OCI-LY7 (cell line): ENCODE measurements at regions of chr3 and their contacts with region 1.

Region 1: GRCh38 chr3:100386437-100387074 is 14.3 kb downstream of the TOMM70 start:
- DNase-seq: no peak
- H3K4me3 ChIP-seq: no peak overlapping the region
- H3K27ac ChIP-seq: no peak overlapping the region
- H3K4me1 ChIP-seq: no peaks in the 10 kb centered on the region
- CTCF ChIP-seq: no peak

Region 2: DNA sequence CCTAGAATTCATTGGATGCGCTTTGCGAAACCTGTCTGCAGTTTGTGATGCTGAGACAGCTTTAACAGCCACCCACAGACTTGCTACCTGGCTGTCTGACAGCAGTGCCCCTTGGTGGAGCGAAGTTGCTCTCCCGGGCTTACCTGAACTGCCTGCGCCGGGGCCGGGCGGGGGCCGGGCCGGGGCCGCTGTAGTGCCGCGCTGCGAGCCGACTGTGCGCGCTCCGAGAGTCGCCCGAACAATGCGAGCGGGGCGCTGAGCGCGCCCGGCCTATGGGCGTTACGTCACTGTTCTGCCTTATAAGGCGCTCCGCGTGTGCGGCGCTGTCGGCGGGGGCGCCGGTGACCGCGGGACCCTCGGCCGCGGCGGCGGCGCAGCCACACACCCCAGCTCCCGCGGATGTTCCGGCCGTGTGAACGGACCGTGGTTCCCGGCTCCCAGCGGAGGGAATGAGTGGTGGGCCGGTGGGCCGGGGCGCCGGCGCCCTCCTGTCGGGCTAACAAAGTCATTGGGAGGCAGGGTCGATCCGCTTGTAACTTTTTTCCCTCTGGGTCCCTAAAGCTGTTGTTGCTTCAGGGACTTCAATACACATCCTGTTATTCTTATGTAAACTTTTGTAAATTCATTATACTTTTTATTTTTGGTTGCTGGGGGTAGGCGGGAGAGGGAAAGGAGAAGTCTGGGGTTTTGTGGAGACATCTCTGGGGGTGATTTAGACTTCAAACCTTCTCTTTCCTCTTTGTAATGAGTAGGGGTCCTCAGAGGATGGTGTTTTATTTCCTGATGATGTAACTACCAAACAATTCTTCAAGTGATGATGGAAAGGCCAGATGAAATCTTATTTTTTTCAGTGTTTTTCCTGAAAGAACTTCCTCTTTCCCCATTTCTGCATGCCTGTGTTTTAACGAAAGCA is 510.4 kb before region 1 on chr3:
- CTCF ChIA-PET with region 1: no interaction called
- POLR2A ChIA-PET with region 1: no interaction called
- intact Hi-C with region 1: no loop called
- DNase-seq: no peak
- H3K4me3 ChIP-seq: no peak overlapping the region
- H3K27ac ChIP-seq: no peak overlapping the region
- H3K4me1 ChIP-seq: no peaks in the 10 kb centered on the region
- CTCF ChIP-seq: no peak

Region 3: GRCh38 chr3:100339786-100340185 is 46.8 kb before region 1 on chr3:
- CTCF ChIA-PET with region 1: no interaction called
- POLR2A ChIA-PET with region 1: interaction called, 3 read pairs
- intact Hi-C with region 1: loop called (anchors 5 kb)
- DNase-seq: no peak
- H3K4me3 ChIP-seq: no peak overlapping the region
- H3K27ac ChIP-seq: no peak overlapping the region
- H3K4me1 ChIP-seq: peaks cover 9% of the 10 kb centered on the region
- CTCF ChIP-seq: no peak

Region 4: GRCh38 chr3:100370756-100371155 is 15.8 kb before region 1 on chr3:
- CTCF ChIA-PET with region 1: no interaction called
- POLR2A ChIA-PET with region 1: interaction called, 10 read pairs
- intact Hi-C with region 1: no loop called
- DNase-seq: no peak
- H3K4me3 ChIP-seq: no peak overlapping the region
- H3K27ac ChIP-seq: no peak overlapping the region
- H3K4me1 ChIP-seq: no peaks in the 10 kb centered on the region
- CTCF ChIP-seq: no peak

Region 5: DNA sequence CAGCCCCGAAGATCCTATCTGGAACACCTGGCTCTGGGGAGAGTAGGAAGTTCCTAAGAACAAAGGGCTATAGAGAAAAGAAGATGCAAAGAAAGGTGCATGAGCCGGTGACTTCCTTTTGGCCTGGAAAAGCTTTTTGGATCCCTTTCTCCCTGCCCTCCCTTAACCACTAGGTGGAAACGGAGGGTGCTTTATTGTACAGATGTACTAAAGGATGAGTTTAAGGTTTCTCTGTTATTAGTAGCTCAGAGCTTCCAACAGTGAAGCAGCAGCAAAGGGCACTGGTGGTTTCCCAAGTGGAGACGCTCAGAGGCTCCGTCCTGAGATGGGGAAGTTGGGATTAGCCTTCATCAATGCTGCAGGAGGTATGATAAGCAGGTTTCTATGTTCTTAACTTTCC is 216.9 kb after region 1 on chr3:
- CTCF ChIA-PET with region 1: no interaction called
- POLR2A ChIA-PET with region 1: no interaction called
- intact Hi-C with region 1: no loop called
- DNase-seq: peak; percentile 6
- H3K4me3 ChIP-seq: peak overlapping the region; percentile 23
- H3K27ac ChIP-seq: no peak overlapping the region
- H3K4me1 ChIP-seq: no peaks in the 10 kb centered on the region
- CTCF ChIP-seq: peak; percentile 51